ENCODE measurements at regions of chr5 and their contacts with region 1.

Region 1: GRCh38 chr5:72394688-72395087 is 74.5 kb downstream of the PTCD2 start:
- DNase-seq: no peak
- H3K4me3 ChIP-seq: no peak overlapping the region
- CTCF ChIP-seq: peak; percentile 19

Region 2: DNA sequence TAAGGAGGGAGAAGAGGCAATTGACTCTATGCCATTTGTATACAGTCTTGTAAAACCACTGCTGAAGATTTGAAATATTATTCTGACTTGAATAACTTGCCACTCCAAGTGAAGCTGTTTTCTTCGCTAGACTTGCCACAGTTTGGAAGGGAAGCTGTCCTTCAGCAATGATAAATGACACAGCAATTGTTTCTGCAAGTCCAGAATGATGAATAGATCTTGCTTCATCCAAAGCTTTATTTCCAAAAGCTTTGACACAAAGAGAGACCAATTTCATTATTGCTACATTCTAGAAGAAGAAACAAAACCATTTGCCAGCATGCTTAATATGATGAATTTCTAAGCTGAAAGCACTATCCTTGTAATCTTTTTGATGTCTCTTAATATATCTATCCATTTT is 38.8 kb after region 1 on chr5:
- in situ Hi-C with region 1: loop called (anchors 5 kb)
- DNase-seq: no peak
- H3K4me3 ChIP-seq: no peak overlapping the region
- CTCF ChIP-seq: no peak

Measured in astrocyte of the cerebellum (primary cell).